Panc1 (cell line): ENCODE measurements at regions of chr11 and their contacts with region 1.

Region 1: DNA sequence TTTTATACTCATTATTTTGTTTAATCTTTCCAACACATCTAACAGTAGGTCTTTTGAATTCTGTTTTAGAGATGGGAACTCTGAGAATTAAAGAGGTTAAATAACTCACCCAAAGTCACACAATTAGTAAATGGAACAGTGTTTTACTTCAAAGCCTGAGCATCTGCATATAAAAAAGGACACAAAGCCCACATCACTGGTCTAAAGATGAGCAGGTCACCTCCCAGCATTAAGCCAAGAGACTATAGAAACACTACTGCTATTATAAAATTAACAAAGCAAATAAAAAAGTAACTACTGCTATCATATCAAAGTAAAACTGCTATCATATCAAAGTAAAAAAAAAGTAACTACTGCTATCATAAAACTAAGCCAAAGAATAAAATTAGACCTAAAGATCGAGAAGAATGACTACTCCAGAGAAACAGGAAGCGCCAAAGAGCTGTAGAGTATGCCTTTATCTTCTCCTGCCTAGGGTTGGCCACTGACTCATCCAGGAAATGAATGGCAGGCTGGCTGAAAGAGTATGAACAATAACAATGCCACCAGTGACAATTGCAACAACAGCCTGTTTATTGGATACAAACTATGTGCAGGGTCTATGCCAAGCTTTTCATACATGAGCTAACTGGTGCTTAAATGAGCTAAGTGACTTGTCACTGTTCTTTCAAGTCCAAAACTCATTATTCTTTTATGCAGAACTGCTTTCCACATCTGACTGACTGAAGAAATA is 1153.0 kb upstream of the TENM4 start:
- DNase-seq: peak; percentile 58
- ATAC-seq: peak; percentile 92
- H3K4me3 ChIP-seq: no peak overlapping the region
- H3K27ac ChIP-seq: peak overlapping the region; percentile 70
- H3K4me1 ChIP-seq: peaks cover 29% of the 10 kb centered on the region
- H3K27me3 ChIP-seq: no peaks in the 10 kb centered on the region
- CTCF ChIP-seq: no peak

Region 2: GRCh38 chr11:80621871-80622270 is 28.1 kb after region 1 on chr11:
- CTCF ChIA-PET with region 1: no interaction called
- POLR2A ChIA-PET with region 1: no interaction called
- in situ Hi-C with region 1: no loop called
- intact Hi-C with region 1: no loop called
- DNase-seq: no peak
- ATAC-seq: no peak
- H3K4me3 ChIP-seq: no peak overlapping the region
- H3K27ac ChIP-seq: no peak overlapping the region
- H3K4me1 ChIP-seq: no peaks in the 10 kb centered on the region
- H3K27me3 ChIP-seq: no peaks in the 10 kb centered on the region
- CTCF ChIP-seq: no peak

Region 3: GRCh38 chr11:80650966-80651365 is 57.2 kb after region 1 on chr11:
- CTCF ChIA-PET with region 1: no interaction called
- POLR2A ChIA-PET with region 1: no interaction called
- in situ Hi-C with region 1: no loop called
- intact Hi-C with region 1: loop called (anchors 10 kb)
- DNase-seq: no peak
- ATAC-seq: no peak
- H3K4me3 ChIP-seq: no peak overlapping the region
- H3K27ac ChIP-seq: no peak overlapping the region
- H3K4me1 ChIP-seq: no peaks in the 10 kb centered on the region
- H3K27me3 ChIP-seq: no peaks in the 10 kb centered on the region
- CTCF ChIP-seq: no peak